Dorsolateral prefrontal cortex (tissue), 120 donors: ENCODE measurements at regions of chr21 and their contacts with region 1.

Region 1: DNA sequence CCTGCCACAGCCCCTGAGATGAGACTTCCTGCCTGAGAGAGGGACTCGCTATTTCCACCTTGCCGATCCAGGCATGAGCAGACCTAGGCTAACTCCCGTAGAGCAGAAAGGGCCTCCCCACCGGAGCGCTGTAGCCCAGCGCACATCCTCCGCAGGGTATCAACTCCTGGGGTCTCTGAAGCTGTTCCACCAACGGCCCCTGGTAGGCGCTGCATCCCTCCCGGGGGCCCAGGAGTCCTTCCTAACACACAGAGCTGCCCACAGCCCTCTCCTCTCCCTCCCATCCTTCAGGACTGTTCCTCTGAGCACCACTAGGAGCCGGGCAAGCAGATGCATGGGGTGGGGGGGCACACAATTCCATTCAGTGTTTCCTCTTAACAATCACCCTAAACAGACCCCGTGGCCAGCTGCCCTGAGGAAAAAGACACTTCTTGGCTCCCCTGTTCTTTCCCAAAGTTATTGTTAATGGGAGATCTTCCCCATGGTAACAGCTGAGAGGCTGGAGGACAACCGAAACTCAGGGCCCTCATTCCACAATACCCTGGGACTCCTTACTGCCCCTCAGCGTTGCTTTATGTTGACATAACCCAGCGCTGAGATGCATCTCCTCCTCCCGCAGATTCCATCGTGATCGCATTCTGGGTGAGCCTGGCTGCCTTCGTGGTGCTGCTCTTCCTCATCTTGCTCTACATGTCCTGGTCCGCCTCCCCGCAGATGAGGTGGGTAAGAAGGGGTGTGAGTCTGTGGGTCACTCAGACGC is 7.5 kb downstream of the MRAP start:
- DNase-seq: peak in 9 of 10 donors; percentile 64 to 89 (median 82)
- H3K4me3 ChIP-seq: peak overlapping the region in 35 of 59 donors; percentile 3 to 54 (median 24)
- H3K27ac ChIP-seq: peak overlapping the region in 58 of 59 donors; percentile 13 to 92 (median 82)
- H3K27me3 ChIP-seq: no peaks in the 10 kb centered on the region
- CTCF ChIP-seq: peak; percentile 30 to 88 (median 73)

Region 2: GRCh38 chr21:32340863-32341848 is 35.0 kb after region 1 on chr21:
- intact Hi-C with region 1: loop called in 1 of 2 experiments (anchors 5 kb)
- DNase-seq: no peak
- H3K4me3 ChIP-seq: peak overlapping the region in 3 of 59 donors; percentile 1 to 21 (median 15)
- H3K27ac ChIP-seq: peak overlapping the region in 48 of 59 donors; percentile 0 to 77 (median 55)
- H3K27me3 ChIP-seq: no peaks in the 10 kb centered on the region
- CTCF ChIP-seq: peak in 7 of 56 donors; percentile 15 to 33 (median 23)

Region 3: DNA sequence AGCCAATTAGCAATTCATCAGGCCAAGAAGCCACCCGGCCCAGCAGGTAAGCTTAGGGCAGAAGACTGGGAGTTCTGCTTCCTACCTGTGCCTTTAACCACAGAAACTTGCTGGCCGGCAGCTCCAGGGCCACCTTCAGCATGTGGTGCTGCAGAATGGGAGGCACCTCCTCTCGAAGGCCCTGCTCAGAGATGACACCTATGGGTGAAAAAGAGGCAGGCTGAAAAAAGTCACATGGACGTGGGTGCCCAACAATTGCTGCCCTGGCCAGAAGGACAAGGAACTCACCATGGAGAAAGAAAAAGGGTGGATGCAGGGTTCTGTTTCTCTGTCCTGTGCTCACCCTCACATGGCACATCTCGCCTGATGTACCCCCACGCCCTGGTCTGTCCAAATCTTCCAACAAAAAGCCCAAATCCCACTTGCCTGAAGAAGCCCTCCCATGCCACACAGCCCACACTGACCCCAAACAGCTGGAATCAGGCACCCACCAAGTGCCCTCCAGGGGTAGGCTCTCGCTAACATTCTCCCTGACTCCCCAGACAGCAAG is 53.6 kb after region 1 on chr21:
- intact Hi-C with region 1: no loop called
- DNase-seq: no peak
- H3K4me3 ChIP-seq: no peak overlapping the region
- H3K27ac ChIP-seq: peak overlapping the region in 15 of 59 donors; percentile 10 to 57 (median 24)
- H3K27me3 ChIP-seq: no peaks in the 10 kb centered on the region
- CTCF ChIP-seq: peak in 53 of 56 donors; percentile 11 to 59 (median 37)

Region 4: DNA sequence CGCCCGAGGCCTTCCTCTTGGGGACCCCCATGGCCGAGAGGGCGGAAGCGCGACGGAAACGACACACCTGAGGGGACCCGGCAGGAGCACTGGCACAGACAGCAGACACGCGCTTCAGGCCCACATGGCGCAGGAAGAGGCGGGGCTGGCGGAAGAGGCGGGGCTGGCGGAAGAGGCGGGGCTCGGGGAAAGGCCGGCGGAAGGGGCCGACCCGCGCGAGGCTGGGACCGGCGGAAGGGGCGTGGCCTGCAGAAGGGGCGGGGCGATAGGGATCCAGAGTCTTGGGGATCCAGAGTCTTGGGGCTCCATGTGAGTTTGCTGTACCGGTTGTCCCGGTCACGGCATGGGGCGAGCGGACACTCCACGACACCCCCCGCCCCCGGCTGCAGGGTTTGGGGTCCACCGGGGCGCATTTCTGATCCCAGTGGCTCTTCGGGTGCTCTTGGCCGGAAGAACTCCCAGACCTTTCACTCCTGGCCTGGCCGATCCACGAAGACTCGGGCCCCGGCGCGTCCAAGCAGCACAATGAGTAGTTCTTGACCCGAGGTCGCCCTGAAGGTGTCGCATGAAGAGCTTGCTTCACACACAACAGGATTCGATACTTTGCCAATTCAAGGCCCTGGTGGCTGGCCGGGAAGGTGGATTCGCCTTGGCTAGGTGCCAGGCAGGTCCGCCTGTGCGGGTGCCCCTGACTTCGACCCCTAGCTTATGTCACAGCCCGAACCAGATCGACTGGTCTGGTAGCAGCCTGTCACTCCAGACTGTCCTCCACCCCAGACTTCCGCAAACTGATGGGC is 86.9 kb after region 1 on chr21 and contains the start of gene URB1:
- intact Hi-C with region 1: loop called in 1 of 2 experiments (anchors 10 kb)
- DNase-seq: peak; percentile 89 to 98 (median 91)
- H3K4me3 ChIP-seq: peak within 1 kb of the TSS; percentile 61 to 100 (median 95)
- H3K27ac ChIP-seq: peak within 1 kb of the TSS in 49 of 59 donors; percentile 7 to 90 (median 75)
- H3K27me3 ChIP-seq: no peaks in the 10 kb centered on the region
- CTCF ChIP-seq: peak in 3 of 56 donors; percentile 8 to 27 (median 25)
- total RNA-seq, gene URB1: 16.2 to 31.0 (median 22.1) TPM

Region 5: GRCh38 chr21:32448803-32449594 is 142.8 kb after region 1 on chr21:
- intact Hi-C with region 1: no loop called
- DNase-seq: no peak
- H3K4me3 ChIP-seq: no peak overlapping the region
- H3K27ac ChIP-seq: no peak overlapping the region
- H3K27me3 ChIP-seq: no peaks in the 10 kb centered on the region
- CTCF ChIP-seq: no peak